ENCODE measurements at regions of chr1 and their contacts with region 1.

Region 1: GRCh38 chr1:40979233-40980067 is at the start of gene CTPS1:
- DNase-seq: peak; percentile 71 to 96
- H3K4me3 ChIP-seq: peak within 1 kb of the TSS; percentile 78 to 83
- H3K27ac ChIP-seq: peak within 1 kb of the TSS; percentile 96 to 98
- H3K4me1 ChIP-seq: peaks cover 7 to 30% of the 10 kb centered on the region in 2 donors
- H3K27me3 ChIP-seq: no peaks in the 10 kb centered on the region
- CTCF ChIP-seq: peak in 1 of 3 experiments; percentile 21
- total RNA-seq, gene CTPS1: 33.0 TPM

Region 2: GRCh38 chr1:41078616-41079015 is 99.2 kb after region 1 on chr1:
- intact Hi-C with region 1: no loop called
- DNase-seq: no peak
- H3K4me3 ChIP-seq: no peak overlapping the region
- H3K27ac ChIP-seq: no peak overlapping the region
- H3K4me1 ChIP-seq: no peaks in the 10 kb centered on the region
- H3K27me3 ChIP-seq: no peaks in the 10 kb centered on the region
- CTCF ChIP-seq: no peak

Region 3: GRCh38 chr1:41101950-41102607 is 122.6 kb after region 1 on chr1:
- intact Hi-C with region 1: loop called (anchors 5 kb)
- DNase-seq: peak; percentile 18 to 96
- H3K4me3 ChIP-seq: no peak overlapping the region
- H3K27ac ChIP-seq: peak overlapping the region; percentile 46 to 69
- H3K4me1 ChIP-seq: peaks cover 18 to 39% of the 10 kb centered on the region in 2 donors
- H3K27me3 ChIP-seq: no peaks in the 10 kb centered on the region
- CTCF ChIP-seq: no peak

Measured in ascending aorta (tissue), 2 donors.